ENCODE measurements at regions of chr7 and their contacts with region 1.

Region 1: DNA sequence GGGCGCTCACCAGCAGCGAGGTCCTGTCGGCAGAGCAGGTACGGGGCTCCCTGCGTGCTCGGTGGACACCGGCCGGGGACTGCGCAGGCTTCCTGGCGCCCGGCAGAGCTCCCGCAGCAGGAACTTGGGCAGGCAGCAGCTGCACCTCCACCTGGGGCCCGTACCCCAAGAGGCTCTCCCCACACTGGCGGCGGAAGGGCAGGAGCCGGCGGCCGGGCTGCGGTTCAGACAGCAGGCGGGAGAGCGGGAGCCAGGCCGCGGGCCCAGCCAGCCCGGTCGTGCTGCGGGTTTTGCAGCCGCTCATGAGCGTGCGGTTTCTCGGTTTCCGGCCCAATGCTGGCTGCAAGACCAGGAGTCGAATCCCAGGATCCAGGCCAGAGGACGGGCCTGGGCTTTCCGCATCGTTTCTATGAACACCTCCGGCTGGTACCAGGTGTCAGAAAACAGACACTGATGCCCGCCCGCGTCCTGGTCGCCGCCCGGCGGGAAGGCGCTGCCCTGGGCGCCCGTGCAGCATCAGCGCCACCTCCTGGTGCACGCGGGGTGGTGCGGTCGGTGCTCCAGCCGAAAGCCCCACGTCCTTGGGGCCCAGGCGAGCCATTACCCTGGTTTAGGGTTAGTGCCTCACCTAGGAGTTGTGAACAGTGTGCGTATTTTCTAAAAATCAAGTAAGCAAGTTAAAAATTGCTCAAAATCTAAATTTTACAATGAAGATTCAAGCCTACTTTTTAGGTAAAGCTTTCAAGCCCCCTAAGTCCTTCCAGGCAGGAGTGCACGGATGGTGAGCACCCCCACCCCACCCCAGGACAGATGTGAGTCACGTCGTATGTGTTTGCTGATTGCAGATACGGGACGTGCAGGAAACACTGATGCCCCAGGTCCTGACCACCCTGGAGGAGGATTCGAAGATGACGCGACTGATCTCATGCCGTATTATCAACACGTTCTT is 47.4 kb upstream of the PRKAR1B start:
- DNase-seq: peak; percentile 46 to 66
- H3K4me3 ChIP-seq: no peak overlapping the region
- H3K27ac ChIP-seq: no peak overlapping the region
- H3K4me1 ChIP-seq: peaks cover 8 to 22% of the 10 kb centered on the region in 2 donors
- H3K27me3 ChIP-seq: no peaks in the 10 kb centered on the region
- CTCF ChIP-seq: peak; percentile 83 to 92 (median 84)
- POLR2A ChIP-seq: no peak

Region 2: DNA sequence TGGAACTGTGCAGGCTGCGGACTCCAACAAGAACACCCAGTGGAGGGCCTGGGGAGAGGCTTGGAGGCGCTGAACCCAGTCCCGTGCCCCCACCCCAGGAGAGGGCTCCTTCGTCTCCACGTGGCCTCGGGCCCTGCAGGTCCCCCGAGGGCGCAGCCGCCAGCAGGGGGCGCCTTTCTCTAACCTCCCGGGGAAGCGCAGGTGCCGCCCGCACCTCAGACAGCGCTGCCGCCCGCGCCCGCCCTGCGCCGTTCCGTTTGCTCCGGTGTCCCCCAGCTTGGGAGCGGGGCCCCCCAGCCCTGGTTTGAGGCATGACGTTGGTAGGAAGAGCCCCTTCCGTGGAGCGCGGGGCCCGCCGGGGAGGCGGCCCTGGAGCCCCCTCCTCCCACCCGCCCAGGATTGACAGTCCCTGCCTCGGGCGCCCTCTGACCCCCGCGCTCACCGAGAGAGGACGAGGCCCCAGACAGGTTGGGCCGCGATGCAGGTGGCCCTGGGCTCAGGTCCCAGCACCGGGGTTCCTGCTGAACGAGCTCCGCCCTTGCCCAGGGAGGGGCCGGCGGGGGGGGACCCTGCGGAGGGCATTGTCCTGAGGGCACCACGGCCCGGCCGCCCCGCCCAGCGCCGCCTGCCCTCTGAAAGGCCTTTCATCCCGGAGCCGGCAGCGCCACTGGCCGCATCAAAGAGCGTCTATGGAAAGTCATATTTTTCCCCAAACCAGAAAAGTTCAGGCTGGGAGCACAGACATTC is 441.6 kb before region 1 on chr7:
- intact Hi-C with region 1: loop called (anchors 5 kb)
- DNase-seq: peak; percentile 61 to 62
- H3K4me3 ChIP-seq: peak overlapping the region; percentile 1 to 18
- H3K27ac ChIP-seq: peak overlapping the region; percentile 18 to 46
- H3K4me1 ChIP-seq: peaks cover 0 to 11% of the 10 kb centered on the region in 2 donors
- H3K27me3 ChIP-seq: peaks cover 0 to 5% of the 10 kb centered on the region in 2 donors
- CTCF ChIP-seq: peak; percentile 69 to 77 (median 74)
- POLR2A ChIP-seq: no peak

Region 3: GRCh38 chr7:1223196-1223981 is 449.0 kb after region 1 on chr7:
- intact Hi-C with region 1: no loop called
- DNase-seq: no peak
- H3K4me3 ChIP-seq: no peak overlapping the region
- H3K27ac ChIP-seq: no peak overlapping the region
- H3K4me1 ChIP-seq: peaks cover 0 to 6% of the 10 kb centered on the region in 2 donors
- H3K27me3 ChIP-seq: peaks cover 29 to 51% of the 10 kb centered on the region in 2 donors
- CTCF ChIP-seq: no peak
- POLR2A ChIP-seq: no peak

Measured in uterus (tissue), 4 donors.